ENCODE measurements at regions of chr5 and their contacts with region 1.

Region 1: GRCh38 chr5:150738862-150739261 is 20.0 kb downstream of the DCTN4 start:
- DNase-seq: no peak
- ATAC-seq: no peak
- H3K4me3 ChIP-seq: no peak overlapping the region
- H3K27ac ChIP-seq: no peak overlapping the region
- H3K4me1 ChIP-seq: no peaks in the 10 kb centered on the region
- H3K27me3 ChIP-seq: no peaks in the 10 kb centered on the region
- CTCF ChIP-seq: no peak

Region 2: DNA sequence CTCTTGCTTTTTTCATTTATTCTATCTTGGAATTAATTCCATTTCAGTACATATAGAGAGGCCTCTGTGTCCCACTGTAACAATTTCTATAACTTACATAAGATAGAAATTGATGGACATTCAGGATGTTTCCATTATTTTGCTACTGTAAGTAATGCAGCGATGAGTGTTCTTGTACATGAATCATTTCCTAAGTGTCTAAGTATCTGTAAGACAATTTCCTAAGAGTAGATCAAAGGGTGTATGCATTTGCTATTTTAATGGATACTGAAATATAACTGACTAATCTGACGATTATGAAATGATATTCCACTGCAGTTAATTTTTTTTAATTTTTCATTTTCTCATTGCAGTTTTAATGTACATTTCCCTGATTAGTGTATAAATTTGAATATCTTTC is 15.0 kb before region 1 on chr5:
- CTCF ChIA-PET with region 1: no interaction called
- POLR2A ChIA-PET with region 1: interaction called, 12 read pairs
- in situ Hi-C with region 1: no loop called
- intact Hi-C with region 1: no loop called
- DNase-seq: no peak
- ATAC-seq: no peak
- H3K4me3 ChIP-seq: no peak overlapping the region
- H3K27ac ChIP-seq: no peak overlapping the region
- H3K4me1 ChIP-seq: no peaks in the 10 kb centered on the region
- H3K27me3 ChIP-seq: no peaks in the 10 kb centered on the region
- CTCF ChIP-seq: no peak

Measured in Panc1 (cell line).